Cardiac septum (tissue), 1 donor: ENCODE measurements at regions of chr2 and their contacts with region 1.

Region 1: DNA sequence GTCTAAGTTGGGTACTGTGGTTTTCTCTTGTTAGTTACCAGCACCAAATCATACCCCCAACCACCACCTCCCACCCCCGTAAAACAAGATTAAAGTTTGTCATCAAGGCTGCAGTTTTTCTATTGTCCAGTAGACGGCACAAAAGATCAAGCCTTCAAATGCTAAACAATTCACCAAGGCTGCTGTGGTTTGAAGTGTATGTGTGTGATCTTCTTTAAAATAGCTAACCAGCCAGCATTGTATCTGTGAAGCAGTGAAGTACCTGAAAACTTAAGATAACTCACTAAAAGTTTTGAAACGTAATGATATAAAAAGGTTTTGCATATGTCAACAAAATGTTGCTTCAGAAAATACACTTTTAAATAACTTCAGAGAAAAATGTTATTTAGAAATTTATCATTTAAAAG is 5.9 kb upstream of the MEIS1 start:
- DNase-seq: no peak

Region 2: GRCh38 chr2:67322353-67323001 is 893.4 kb after region 1 on chr2:
- intact Hi-C with region 1: loop called (anchors 10 kb)
- DNase-seq: no peak